ENCODE measurements at regions of chr14 and their contacts with region 1.

Region 1: DNA sequence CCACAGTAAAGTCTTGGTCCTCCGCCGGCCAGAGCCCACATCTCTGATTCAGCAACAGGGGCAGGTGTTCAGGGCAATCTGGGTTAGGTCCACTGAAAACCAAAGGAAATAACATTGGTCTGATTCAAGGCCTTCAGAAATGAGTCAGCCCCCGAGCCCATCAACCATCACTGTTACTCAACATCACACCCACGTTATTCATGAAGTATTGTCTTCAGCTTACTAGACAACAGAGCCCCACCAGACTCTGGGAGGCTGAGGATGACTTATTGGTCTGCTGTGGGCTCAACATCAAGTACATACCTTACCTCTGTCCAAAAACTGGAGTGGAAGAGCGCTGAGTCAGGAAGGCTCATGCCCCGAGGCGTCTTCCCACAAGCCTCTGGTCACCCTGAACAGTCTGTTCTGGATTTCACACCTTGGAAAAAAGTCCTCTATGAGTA is 97.5 kb downstream of the ZFP36L1 start:
- DNase-seq: peak; percentile 87 to 96 (median 94)
- H3K4me3 ChIP-seq: no peak overlapping the region
- H3K4me3 Mint-ChIP-seq: peak overlapping the region; percentile 54 to 61
- H3K27ac ChIP-seq: peak overlapping the region in 1 of 2 donors; percentile 46
- H3K27ac Mint-ChIP-seq: peak overlapping the region; percentile 74 to 92 (median 88)
- H3K4me1 ChIP-seq: peaks cover 40 to 48% of the 10 kb centered on the region in 2 donors
- H3K4me1 Mint-ChIP-seq: peaks cover 46% of the 10 kb centered on the region
- H3K27me3 ChIP-seq: no peaks in the 10 kb centered on the region
- H3K27me3 Mint-ChIP-seq: peaks cover 13 to 20% (median 14%) of the 10 kb centered on the region in 3 donors
- CTCF ChIP-seq: no peak

Region 2: DNA sequence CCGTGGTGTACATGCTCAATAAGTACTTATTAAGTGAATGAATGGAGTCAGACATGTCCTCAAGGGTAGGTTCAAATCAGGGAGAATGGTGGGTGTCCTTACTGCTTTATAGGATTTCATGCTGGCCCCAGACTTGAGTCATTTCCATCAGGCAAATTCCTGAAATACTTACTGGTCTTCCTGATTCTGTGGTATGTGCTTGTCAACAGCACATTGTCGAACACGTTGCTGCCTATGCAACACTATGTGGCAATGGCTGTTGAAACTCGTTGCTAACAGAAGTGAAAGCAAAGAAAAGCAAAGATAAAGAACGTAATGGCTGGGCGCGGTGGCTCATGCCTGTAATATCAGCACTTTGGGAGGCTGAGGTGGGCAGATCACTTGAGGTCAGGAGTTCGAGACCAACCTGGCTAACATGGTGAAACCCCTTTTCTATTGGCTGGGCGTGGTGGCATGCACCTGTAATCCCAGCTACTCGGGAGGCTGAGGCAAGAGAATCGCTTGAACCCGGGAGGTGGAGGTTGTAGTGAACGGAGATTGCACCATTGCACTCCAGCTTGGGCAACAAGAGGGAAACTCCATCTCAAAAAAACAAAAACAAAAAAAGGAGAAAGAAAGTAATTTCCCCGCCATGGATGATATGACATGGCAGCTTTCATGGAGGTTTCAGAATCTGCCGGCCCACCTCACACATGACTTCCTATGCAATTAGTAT is 117.4 kb before region 1 on chr14:
- intact Hi-C with region 1: loop called in 1 of 2 experiments (anchors 5 kb)
- DNase-seq: peak; percentile 94 to 99 (median 97)
- H3K4me3 ChIP-seq: peak overlapping the region in 1 of 3 experiments; percentile 2
- H3K4me3 Mint-ChIP-seq: peak overlapping the region; percentile 64 to 85
- H3K27ac ChIP-seq: peak overlapping the region; percentile 89 to 92
- H3K27ac Mint-ChIP-seq: peak overlapping the region; percentile 99 to 100 (median 100)
- H3K4me1 ChIP-seq: peaks cover 65 to 68% of the 10 kb centered on the region in 2 donors
- H3K4me1 Mint-ChIP-seq: peaks cover 68% of the 10 kb centered on the region
- H3K27me3 ChIP-seq: no peaks in the 10 kb centered on the region
- H3K27me3 Mint-ChIP-seq: peaks cover 0 to 2% (median 2%) of the 10 kb centered on the region in 3 donors
- CTCF ChIP-seq: no peak

Region 3: GRCh38 chr14:68734231-68734775 is 39.0 kb after region 1 on chr14:
- intact Hi-C with region 1: loop called in 1 of 2 experiments (anchors 1 kb)
- DNase-seq: peak; percentile 92 to 96 (median 95)
- H3K4me3 ChIP-seq: peak overlapping the region in 1 of 3 experiments; percentile 15
- H3K4me3 Mint-ChIP-seq: peak overlapping the region; percentile 34 to 64
- H3K27ac ChIP-seq: peak overlapping the region; percentile 97 to 99
- H3K27ac Mint-ChIP-seq: peak overlapping the region; percentile 98 to 100 (median 99)
- H3K4me1 ChIP-seq: peaks cover 45 to 50% of the 10 kb centered on the region in 2 donors
- H3K4me1 Mint-ChIP-seq: peaks cover 64% of the 10 kb centered on the region
- H3K27me3 ChIP-seq: peaks cover 20 to 39% of the 10 kb centered on the region in 2 donors
- H3K27me3 Mint-ChIP-seq: peaks cover 46 to 61% (median 46%) of the 10 kb centered on the region in 3 donors
- CTCF ChIP-seq: no peak